ENCODE measurements at regions of chr2 and their contacts with region 1.

Region 1: DNA sequence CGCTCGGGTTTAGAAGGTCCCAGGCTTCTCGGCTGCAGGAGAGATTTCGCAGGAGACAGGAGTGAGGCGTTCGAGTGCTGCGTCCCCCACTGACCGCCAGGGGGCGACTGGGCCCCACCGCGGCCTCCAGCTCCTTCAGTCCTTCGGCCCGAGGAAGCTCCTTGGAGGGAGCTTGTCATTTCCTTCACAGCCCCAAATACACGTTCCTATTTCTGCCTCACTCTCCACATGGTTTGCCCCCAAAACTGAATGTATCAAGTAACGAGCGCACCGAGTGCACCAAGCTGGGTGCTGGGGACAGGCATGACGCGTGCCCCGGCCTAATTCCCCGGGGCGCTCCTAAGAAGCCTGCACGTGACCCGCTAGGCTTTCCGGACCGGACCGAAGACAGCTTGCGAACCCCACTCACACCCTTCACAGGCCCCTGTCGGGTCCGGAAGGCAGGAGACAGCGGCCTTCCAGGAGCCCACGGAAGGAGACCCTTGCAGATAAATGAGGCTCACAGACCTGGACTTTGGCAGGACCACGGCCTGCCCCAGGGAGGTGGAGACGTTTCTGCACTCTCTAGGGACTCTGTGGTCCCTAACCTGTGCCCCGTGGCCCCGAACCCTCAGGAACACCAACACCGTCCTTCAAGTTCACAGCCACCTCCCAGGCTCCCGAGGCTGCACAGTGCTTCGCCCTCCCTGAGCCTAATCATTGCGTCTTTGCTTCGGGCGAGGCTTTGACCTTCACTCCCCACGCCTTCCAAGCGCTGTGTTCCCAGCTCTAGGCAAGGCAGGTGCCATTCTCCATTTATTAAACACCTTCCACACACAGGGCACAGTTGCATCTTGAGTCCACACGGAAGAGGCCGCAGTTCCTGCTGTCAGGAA is 13.0 kb upstream of the FAHD2A start:
- DNase-seq: peak; percentile 73
- H3K4me3 Mint-ChIP-seq: no peak overlapping the region
- H3K27ac Mint-ChIP-seq: no peak overlapping the region
- H3K4me1 Mint-ChIP-seq: peaks cover 7% of the 10 kb centered on the region
- H3K27me3 Mint-ChIP-seq: no peaks in the 10 kb centered on the region
- CTCF ChIP-seq: peak; percentile 90

Region 2: DNA sequence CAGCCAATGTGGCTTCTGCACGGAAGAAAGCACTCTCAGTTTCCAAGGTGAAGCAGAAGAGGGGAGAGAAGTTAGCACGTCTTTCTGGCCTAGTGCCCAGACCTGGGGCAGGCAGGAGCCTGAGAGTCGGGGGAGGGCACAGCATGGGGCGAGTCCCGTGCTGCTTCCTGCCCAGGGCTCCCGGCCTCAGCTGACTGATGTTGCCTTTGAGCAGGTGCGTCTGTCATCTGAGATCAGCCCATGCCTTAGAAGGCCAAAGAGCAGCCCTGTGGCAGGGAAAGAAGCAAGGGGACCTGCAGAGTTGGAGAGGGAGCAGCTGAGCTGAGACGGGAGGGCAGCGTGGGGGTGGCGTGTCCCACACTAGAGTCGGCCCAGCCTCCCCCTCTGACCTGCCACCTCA is 89.0 kb before region 1 on chr2:
- CTCF ChIA-PET with region 1: no interaction called
- POLR2A ChIA-PET with region 1: no interaction called
- intact Hi-C with region 1: no loop called
- DNase-seq: no peak
- H3K4me3 Mint-ChIP-seq: no peak overlapping the region
- H3K27ac Mint-ChIP-seq: no peak overlapping the region
- H3K4me1 Mint-ChIP-seq: peaks cover 5% of the 10 kb centered on the region
- H3K27me3 Mint-ChIP-seq: peaks cover 12% of the 10 kb centered on the region
- CTCF ChIP-seq: no peak

Region 3: GRCh38 chr2:95353613-95354468 is 35.6 kb before region 1 on chr2:
- CTCF ChIA-PET with region 1: interaction called, 12 read pairs
- POLR2A ChIA-PET with region 1: interaction called, 3 read pairs
- intact Hi-C with region 1: no loop called
- DNase-seq: no peak
- H3K4me3 Mint-ChIP-seq: no peak overlapping the region
- H3K27ac Mint-ChIP-seq: no peak overlapping the region
- H3K4me1 Mint-ChIP-seq: peaks cover 8% of the 10 kb centered on the region
- H3K27me3 Mint-ChIP-seq: no peaks in the 10 kb centered on the region
- CTCF ChIP-seq: no peak

Region 4: GRCh38 chr2:95374921-95375471 is 14.5 kb before region 1 on chr2:
- CTCF ChIA-PET with region 1: interaction called, 10 read pairs
- POLR2A ChIA-PET with region 1: no interaction called
- intact Hi-C with region 1: no loop called
- DNase-seq: no peak
- H3K4me3 Mint-ChIP-seq: no peak overlapping the region
- H3K27ac Mint-ChIP-seq: no peak overlapping the region
- H3K4me1 Mint-ChIP-seq: no peaks in the 10 kb centered on the region
- H3K27me3 Mint-ChIP-seq: no peaks in the 10 kb centered on the region
- CTCF ChIP-seq: no peak